T-cell (primary cell): ENCODE measurements at regions of chr11 and their contacts with region 1.

Region 1: DNA sequence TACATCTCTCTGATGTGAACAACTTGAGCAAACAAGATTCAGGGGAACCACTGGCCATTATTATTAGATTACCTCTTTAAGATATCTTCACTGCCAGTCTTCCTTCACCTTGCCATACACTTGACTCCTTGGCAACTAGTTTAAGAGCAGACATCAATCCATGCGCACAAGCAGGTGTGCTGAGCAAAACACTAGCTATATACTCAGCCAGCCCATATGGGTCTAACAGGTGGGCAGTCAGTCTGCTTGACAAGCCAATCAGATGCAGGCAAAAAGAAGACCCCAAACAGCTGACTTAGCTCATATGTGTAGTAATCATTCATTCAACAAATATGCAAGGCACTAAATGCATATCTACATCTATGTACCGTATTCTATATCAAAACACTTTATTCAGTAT is 101.2 kb downstream of the SIK3 start:
- DNase-seq: no peak
- ATAC-seq: no peak
- H3K4me3 ChIP-seq: no peak overlapping the region
- H3K4me3 Mint-ChIP-seq: no peak overlapping the region
- H3K27ac ChIP-seq: no peak overlapping the region
- H3K27ac Mint-ChIP-seq: peak overlapping the region in 1 of 2 donors; percentile 0
- H3K4me1 ChIP-seq: peaks cover 17 to 22% of the 10 kb centered on the region in 2 experiments
- H3K4me1 Mint-ChIP-seq: peaks cover 56 to 69% (median 67%) of the 10 kb centered on the region in 3 donors
- H3K27me3 ChIP-seq: no peaks in the 10 kb centered on the region
- H3K27me3 Mint-ChIP-seq: no peaks in the 10 kb centered on the region

Region 2: GRCh38 chr11:116533186-116533825 is 463.8 kb before region 1 on chr11:
- CTCF ChIA-PET with region 1: no interaction called
- POLR2A ChIA-PET with region 1: no interaction called
- DNase-seq: no peak
- ATAC-seq: no peak
- H3K4me3 ChIP-seq: no peak overlapping the region
- H3K4me3 Mint-ChIP-seq: no peak overlapping the region
- H3K27ac ChIP-seq: no peak overlapping the region
- H3K27ac Mint-ChIP-seq: no peak overlapping the region
- H3K4me1 ChIP-seq: no peaks in the 10 kb centered on the region
- H3K4me1 Mint-ChIP-seq: no peaks in the 10 kb centered on the region
- H3K27me3 ChIP-seq: peaks cover 6 to 33% of the 10 kb centered on the region in 2 experiments
- H3K27me3 Mint-ChIP-seq: peaks cover 32 to 40% of the 10 kb centered on the region in 2 donors

Region 3: GRCh38 chr11:117026593-117027330 is 29.7 kb after region 1 on chr11:
- CTCF ChIA-PET with region 1: no interaction called
- POLR2A ChIA-PET with region 1: interaction called, 5 to 10 read pairs
- DNase-seq: no peak
- ATAC-seq: peak in 2 of 4 experiments; percentile 43 to 54
- H3K4me3 ChIP-seq: no peak overlapping the region
- H3K4me3 Mint-ChIP-seq: no peak overlapping the region
- H3K27ac ChIP-seq: no peak overlapping the region
- H3K27ac Mint-ChIP-seq: peak overlapping the region; percentile 19 to 71
- H3K4me1 ChIP-seq: peaks cover 11 to 30% of the 10 kb centered on the region in 2 experiments
- H3K4me1 Mint-ChIP-seq: peaks cover 71 to 78% (median 71%) of the 10 kb centered on the region in 3 donors
- H3K27me3 ChIP-seq: no peaks in the 10 kb centered on the region
- H3K27me3 Mint-ChIP-seq: no peaks in the 10 kb centered on the region